Motor neuron (in vitro differentiated cells): ENCODE measurements at regions of chr10 and their contacts with region 1.

Region 1: GRCh38 chr10:3811291-3811870 is 26.4 kb upstream of the KLF6 start:
- ATAC-seq: peak in 2 of 8 experiments; percentile 9 to 19
- H3K4me3 ChIP-seq: no peak overlapping the region
- H3K27ac ChIP-seq: no peak overlapping the region
- H3K4me1 ChIP-seq: peaks cover 5 to 8% of the 10 kb centered on the region in 2 donors

Region 2: DNA sequence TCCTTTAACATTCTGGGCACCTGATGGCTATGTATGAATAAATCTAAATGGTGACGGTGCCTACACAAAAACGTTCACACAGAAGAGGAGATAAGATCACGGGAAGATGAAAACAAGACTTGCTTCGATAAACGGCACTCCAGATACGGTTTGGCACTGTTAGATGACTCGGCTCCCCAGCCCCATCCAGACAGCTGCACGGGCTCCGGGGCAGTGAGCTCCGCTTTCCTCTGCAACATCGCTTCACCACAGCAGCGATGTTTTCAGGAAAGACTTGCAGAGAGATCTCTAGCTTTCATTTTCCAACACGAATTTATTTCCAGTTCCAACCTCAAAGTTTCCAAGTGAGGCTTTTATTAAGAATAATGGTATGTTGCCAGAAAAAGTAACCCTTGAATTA is 158.5 kb before region 1 on chr10:
- in situ Hi-C with region 1: no loop called
- ATAC-seq: peak in 2 of 8 experiments; percentile 59 to 61
- H3K4me3 ChIP-seq: no peak overlapping the region
- H3K27ac ChIP-seq: no peak overlapping the region
- H3K4me1 ChIP-seq: peaks cover 5 to 12% of the 10 kb centered on the region in 2 donors

Region 3: GRCh38 chr10:3935141-3935540 is 123.8 kb after region 1 on chr10:
- in situ Hi-C with region 1: no loop called
- ATAC-seq: peak in 3 of 8 experiments; percentile 47 to 93 (median 89)
- H3K4me3 ChIP-seq: no peak overlapping the region
- H3K27ac ChIP-seq: no peak overlapping the region
- H3K4me1 ChIP-seq: no peaks in the 10 kb centered on the region

Region 4: DNA sequence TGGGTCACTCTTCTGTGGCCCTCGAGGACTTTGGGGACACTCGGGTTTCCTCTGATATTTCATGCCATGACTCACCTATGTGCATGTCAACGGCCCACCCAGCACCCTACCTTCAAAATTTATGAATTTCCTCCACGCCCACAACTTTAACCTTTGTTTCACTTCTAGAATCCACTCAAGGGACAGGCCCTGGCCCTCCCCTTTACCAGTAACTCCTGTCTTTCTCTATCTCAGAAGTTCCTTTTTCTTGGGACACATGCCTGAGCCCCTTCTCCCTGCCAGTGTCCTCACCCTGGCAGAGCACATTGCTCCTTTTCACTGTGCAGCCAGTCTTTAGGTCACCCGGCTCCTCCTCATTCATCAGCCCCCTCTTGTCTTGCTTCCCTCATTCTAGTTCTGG is 256.1 kb after region 1 on chr10:
- in situ Hi-C with region 1: loop called in 1 of 9 experiments (anchors 25 kb)
- ATAC-seq: peak in 3 of 8 experiments; percentile 29 to 86 (median 72)
- H3K4me3 ChIP-seq: no peak overlapping the region
- H3K27ac ChIP-seq: no peak overlapping the region
- H3K4me1 ChIP-seq: no peaks in the 10 kb centered on the region